ENCODE measurements at regions of chr6 and their contacts with region 1.

Region 1: GRCh38 chr6:26196846-26197648 is 109.8 kb downstream of the HFE start:
- DNase-seq: peak; percentile 99
- ATAC-seq: peak; percentile 61
- H3K4me3 ChIP-seq: peak overlapping the region; percentile 73
- H3K27ac ChIP-seq: peak overlapping the region; percentile 80
- H3K4me1 ChIP-seq: no peaks in the 10 kb centered on the region
- H3K27me3 ChIP-seq: no peaks in the 10 kb centered on the region
- CTCF ChIP-seq: no peak
- EP300 ChIP-seq: no peak
- POLR2A ChIP-seq: peak; percentile 99
- RAD21 ChIP-seq: no peak

Region 2: GRCh38 chr6:26103770-26104456 is 93.1 kb before region 1 on chr6:
- CTCF ChIA-PET with region 1: no interaction called
- POLR2A ChIA-PET with region 1: no interaction called
- RAD21 ChIA-PET with region 1: no interaction called
- SMC1A ChIA-PET with region 1: no interaction called
- in situ Hi-C with region 1: no loop called
- intact Hi-C with region 1: loop called (anchors 5 kb)
- DNase-seq: peak; percentile 99
- ATAC-seq: peak; percentile 95
- H3K4me3 ChIP-seq: peak overlapping the region; percentile 63
- H3K27ac ChIP-seq: peak overlapping the region; percentile 79
- H3K4me1 ChIP-seq: no peaks in the 10 kb centered on the region
- H3K27me3 ChIP-seq: no peaks in the 10 kb centered on the region
- CTCF ChIP-seq: peak; percentile 42 to 47 (median 45); a peak in 4 of 6 replicates
- EP300 ChIP-seq: peak; percentile 31 to 93
- POLR2A ChIP-seq: peak; percentile 97
- RAD21 ChIP-seq: peak; percentile 46

Region 3: DNA sequence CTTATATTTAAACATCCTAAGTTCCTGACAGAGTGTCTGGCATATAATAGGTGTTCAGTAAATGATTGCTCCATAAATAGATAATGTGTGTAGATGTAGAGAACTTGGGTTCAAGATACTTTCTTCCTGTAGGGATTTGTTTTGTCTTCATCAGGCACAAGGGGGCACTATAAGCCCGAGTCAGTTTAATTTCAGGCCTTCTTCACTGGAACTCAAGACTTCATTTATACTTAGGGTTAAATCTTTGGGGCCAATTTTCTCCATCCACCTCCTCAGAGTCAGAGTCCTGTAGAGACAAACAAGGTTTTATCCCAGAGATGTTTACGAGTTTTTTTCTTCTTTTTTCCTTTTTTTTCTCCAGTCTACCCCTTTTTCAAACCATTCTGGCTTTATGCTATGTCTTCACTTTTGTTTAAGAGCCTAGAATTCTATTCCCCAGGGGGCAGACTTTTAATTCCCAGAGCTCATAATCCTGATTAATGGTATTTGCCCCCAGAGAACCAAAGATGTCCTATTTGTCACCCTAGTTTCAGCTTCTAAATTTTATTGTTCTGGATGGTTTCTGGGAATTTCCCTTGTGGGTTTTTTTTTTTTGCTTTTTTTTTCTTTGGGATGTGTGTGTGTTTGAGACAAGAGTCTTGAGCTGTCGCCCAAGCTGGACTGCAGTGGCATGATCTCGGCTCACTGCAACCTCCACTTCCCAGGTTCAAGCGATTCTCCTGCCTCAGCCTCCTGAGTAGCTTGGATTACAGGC is 21.4 kb before region 1 on chr6:
- CTCF ChIA-PET with region 1: interaction called, 35 read pairs
- POLR2A ChIA-PET with region 1: interaction called, 12 read pairs
- RAD21 ChIA-PET with region 1: interaction called, 9 read pairs
- SMC1A ChIA-PET with region 1: interaction called, 18 read pairs
- in situ Hi-C with region 1: no loop called
- intact Hi-C with region 1: no loop called
- DNase-seq: no peak
- ATAC-seq: peak; percentile 28
- H3K4me3 ChIP-seq: peak overlapping the region; percentile 9; the same call in 1 of the 2 replicates
- H3K27ac ChIP-seq: peak overlapping the region; percentile 27
- H3K4me1 ChIP-seq: peaks cover 27% of the 10 kb centered on the region
- H3K27me3 ChIP-seq: no peaks in the 10 kb centered on the region
- CTCF ChIP-seq: peak; percentile 56 to 77 (median 64); a peak in 5 of 6 replicates
- EP300 ChIP-seq: no peak
- POLR2A ChIP-seq: no peak
- RAD21 ChIP-seq: peak; percentile 91

Region 4: DNA sequence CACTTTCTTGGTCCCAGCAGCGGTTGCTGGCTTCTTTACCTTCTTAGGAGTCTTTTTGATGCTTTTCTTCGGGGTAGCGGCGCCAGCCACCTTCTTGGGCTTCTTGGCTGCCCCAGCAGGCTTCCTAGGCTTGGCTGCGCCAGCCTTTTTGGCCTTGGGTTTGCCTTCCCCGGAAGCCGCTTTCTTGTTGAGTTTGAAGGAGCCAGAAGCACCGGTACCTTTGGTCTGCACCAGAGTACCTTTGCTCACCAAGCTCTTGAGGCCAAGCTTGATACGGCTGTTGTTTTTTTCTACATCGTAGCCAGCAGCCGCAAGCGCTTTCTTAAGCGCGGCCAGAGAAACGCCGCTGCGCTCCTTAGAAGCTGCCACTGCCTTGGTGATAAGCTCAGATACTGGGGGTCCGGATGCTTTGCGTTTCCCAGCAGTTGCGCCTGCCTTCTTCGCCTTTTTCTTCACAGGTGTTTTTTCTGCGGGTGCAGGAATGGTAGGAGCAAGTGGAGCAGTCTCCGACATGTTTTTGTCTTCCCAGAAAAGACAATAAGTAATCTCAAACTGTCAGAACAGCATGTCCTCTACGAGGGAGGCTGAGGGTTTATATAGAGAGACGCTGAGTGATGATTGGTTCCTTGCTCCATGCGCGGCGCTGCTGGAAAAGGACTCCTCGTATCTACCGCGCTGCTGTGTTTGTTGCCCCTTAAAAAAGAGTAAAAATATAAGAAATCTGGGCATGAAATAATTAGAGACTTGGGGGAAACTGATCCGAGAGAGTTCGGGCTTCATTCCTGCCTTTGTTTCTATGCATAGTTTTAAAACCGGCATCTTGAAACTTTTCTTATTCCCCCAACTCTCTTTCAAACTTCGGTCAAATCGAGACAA is 37.6 kb after region 1 on chr6:
- CTCF ChIA-PET with region 1: interaction called, 3 read pairs
- POLR2A ChIA-PET with region 1: interaction called, 25 read pairs
- RAD21 ChIA-PET with region 1: interaction called, 12 read pairs
- SMC1A ChIA-PET with region 1: interaction called, 4 read pairs
- in situ Hi-C with region 1: no loop called
- intact Hi-C with region 1: no loop called
- DNase-seq: peak; percentile 96
- ATAC-seq: peak; percentile 62
- H3K4me3 ChIP-seq: peak overlapping the region; percentile 83
- H3K27ac ChIP-seq: peak overlapping the region; percentile 95
- H3K4me1 ChIP-seq: peaks cover 2% of the 10 kb centered on the region
- H3K27me3 ChIP-seq: no peaks in the 10 kb centered on the region
- CTCF ChIP-seq: no peak; a peak in 1 of 6 replicates
- EP300 ChIP-seq: peak in 1 of 2 experiments; percentile 64; a peak in 2 of 4 replicates
- POLR2A ChIP-seq: peak; percentile 92
- RAD21 ChIP-seq: 0 out of 2 replicates have a peak, but pooled peaks have one; percentile 13

Region 5: DNA sequence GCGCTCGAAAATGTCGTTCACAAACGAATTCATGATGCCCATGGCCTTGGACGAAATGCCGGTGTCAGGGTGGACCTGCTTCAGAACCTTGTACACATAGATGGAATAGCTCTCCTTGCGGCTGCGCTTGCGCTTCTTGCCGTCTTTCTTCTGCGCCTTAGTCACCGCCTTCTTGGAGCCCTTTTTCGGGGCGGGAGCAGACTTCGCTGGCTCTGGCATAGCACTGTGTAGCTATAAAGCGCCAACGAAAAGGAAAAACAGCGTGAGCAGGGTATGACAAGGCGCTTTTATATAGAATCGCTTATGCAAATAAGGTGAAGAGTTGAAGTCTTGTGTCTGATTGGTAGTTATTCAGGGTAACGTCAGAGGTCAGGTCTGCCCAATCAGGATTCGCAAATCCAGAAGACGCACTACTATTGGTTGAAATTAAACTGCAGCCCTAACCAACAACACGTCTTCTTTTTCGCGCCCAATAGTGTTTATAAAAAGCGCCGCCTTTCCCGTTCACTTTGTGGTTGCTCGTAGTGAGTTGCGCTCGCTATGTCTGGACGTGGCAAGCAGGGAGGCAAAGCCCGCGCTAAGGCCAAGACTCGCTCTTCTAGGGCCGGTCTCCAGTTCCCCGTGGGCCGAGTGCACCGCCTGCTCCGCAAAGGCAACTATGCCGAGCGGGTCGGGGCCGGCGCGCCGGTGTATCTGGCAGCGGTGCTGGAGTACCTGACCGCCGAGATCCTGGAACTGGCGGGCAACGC is 935.7 kb after region 1 on chr6:
- CTCF ChIA-PET with region 1: no interaction called
- POLR2A ChIA-PET with region 1: interaction called, 4 read pairs
- RAD21 ChIA-PET with region 1: no interaction called
- SMC1A ChIA-PET with region 1: no interaction called
- in situ Hi-C with region 1: loop called (anchors 5 kb)
- intact Hi-C with region 1: loop called (anchors 5 kb)
- DNase-seq: peak; percentile 100
- ATAC-seq: peak; percentile 72
- H3K4me3 ChIP-seq: peak overlapping the region; percentile 65
- H3K27ac ChIP-seq: peak overlapping the region; percentile 94
- H3K4me1 ChIP-seq: peaks cover 22% of the 10 kb centered on the region
- H3K27me3 ChIP-seq: no peaks in the 10 kb centered on the region
- CTCF ChIP-seq: no peak
- EP300 ChIP-seq: peak in 1 of 2 experiments; percentile 20; a peak in 1 of 4 replicates
- POLR2A ChIP-seq: peak; percentile 93
- RAD21 ChIP-seq: no peak